ENCODE measurements at regions of chr6 and their contacts with region 1.

Region 1: DNA sequence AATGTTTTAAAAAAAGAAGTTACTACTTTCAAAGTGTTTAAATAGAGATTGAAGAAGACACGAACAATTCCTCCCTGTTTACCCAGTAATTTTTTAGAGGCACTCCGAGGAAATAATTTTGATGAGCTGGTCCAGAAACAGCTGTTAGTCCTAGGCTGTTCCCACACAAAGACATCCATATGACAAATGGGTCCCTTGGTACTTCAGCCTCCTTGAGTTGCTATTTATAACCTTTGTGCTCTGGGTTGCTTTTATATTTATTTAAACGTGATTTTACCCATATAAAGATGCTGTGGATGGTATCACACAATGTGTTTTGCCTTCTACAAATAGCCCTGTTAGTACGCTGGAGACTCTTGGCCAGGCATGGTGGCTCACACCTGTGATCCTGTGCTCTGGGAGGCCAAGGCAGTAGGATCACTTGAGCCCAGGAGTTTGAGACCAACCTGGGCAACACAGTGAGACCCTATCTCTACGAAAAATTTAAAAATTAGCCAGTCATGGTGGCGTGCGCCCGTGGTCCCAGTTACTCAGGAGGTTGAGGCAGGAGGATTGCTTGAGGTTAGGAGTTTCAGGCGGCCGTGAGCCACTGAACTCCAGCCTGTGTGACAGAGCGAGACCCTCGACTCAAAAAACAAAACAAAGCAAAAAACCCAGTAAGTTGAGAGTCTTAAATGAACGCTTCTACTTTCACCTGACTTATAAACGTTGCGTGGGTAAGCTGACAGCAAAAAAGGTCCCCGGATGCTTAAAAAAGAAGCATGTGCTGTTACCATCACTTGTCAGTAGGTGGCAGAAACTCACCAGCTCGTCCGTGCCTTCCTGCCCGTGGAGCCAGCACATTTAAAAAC is 56.9 kb upstream of the ARMH2 start:
- DNase-seq: no peak
- H3K4me3 ChIP-seq: no peak overlapping the region
- H3K27ac ChIP-seq: peak overlapping the region in 3 of 4 donors; percentile 4 to 51 (median 47)
- H3K4me1 ChIP-seq: peaks cover 0 to 54% (median 26%) of the 10 kb centered on the region in 3 donors
- H3K27me3 ChIP-seq: no peaks in the 10 kb centered on the region
- CTCF ChIP-seq: peak; percentile 75 to 91 (median 88)
- POLR2A ChIP-seq: no peak

Region 2: DNA sequence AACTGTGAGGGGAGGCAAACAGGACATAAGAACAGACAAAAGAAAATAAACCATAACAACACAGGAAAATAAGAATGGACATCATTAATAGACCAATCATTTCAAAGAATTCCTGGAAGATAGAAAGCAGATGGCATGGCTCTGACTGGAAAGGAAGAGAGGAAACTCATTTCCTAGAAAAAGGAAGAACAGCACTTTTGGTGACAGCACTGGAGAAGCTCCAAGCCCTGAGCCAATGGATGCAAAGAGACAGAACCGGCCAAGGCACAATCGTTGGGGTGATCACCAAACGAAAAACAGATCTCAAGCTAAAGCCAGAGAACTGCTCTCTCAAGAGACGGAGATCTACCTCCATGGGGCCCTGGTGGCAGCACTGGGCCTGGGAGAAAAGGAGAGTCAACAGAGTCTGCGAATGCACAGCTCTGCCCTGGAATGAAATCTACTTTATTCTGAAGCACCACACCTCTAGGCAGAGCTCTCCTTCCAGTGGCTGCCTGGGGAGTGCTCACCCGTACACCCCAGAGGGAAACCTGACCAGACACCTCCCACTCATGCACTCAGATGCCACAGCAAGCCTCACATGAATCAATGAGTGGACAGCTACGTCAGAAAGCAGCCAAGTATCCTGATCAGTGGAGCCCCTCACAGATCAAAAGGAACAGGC is 233.9 kb before region 1 on chr6:
- intact Hi-C with region 1: no loop called
- DNase-seq: no peak
- H3K4me3 ChIP-seq: no peak overlapping the region
- H3K27ac ChIP-seq: no peak overlapping the region
- H3K4me1 ChIP-seq: no peaks in the 10 kb centered on the region
- H3K27me3 ChIP-seq: no peaks in the 10 kb centered on the region
- CTCF ChIP-seq: no peak
- POLR2A ChIP-seq: no peak

Region 3: DNA sequence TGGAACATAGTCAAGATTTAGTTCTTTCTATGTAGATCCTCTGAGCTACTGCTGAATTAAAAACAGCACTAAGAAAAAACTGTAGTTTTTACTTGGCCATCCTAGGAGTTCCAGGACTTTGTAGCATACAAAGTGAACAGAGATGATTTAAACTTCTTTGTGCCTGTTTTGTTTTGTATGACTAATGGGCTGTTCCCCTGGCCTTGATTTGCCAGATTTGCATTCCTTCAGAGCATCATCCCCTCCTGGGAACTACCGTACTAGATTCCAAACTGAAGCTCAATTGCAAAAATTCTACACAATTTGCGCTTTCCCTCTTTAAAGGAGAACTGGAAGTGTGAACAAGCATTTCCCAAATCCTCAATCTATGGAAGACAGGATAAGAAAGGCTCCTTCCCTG is 165.7 kb before region 1 on chr6:
- intact Hi-C with region 1: no loop called
- DNase-seq: no peak
- H3K4me3 ChIP-seq: no peak overlapping the region
- H3K27ac ChIP-seq: no peak overlapping the region
- H3K4me1 ChIP-seq: no peaks in the 10 kb centered on the region
- H3K27me3 ChIP-seq: no peaks in the 10 kb centered on the region
- CTCF ChIP-seq: no peak
- POLR2A ChIP-seq: no peak

Region 4: GRCh38 chr6:24723258-24723657 is 132.4 kb before region 1 on chr6:
- intact Hi-C with region 1: no loop called
- DNase-seq: no peak
- H3K4me3 ChIP-seq: no peak overlapping the region
- H3K27ac ChIP-seq: no peak overlapping the region
- H3K4me1 ChIP-seq: peaks cover 0 to 17% (median 6%) of the 10 kb centered on the region in 3 donors
- H3K27me3 ChIP-seq: no peaks in the 10 kb centered on the region
- CTCF ChIP-seq: no peak
- POLR2A ChIP-seq: no peak

Region 5: GRCh38 chr6:24991810-24992467 is 136.3 kb after region 1 on chr6:
- intact Hi-C with region 1: loop called (anchors 10 kb)
- DNase-seq: no peak
- H3K4me3 ChIP-seq: no peak overlapping the region
- H3K27ac ChIP-seq: no peak overlapping the region
- H3K4me1 ChIP-seq: peaks cover 0 to 7% (median 0%) of the 10 kb centered on the region in 3 donors
- H3K27me3 ChIP-seq: no peaks in the 10 kb centered on the region
- CTCF ChIP-seq: peak; percentile 65 to 83 (median 70)
- POLR2A ChIP-seq: no peak

Region 6: GRCh38 chr6:25066593-25066992 is 211.0 kb after region 1 on chr6:
- intact Hi-C with region 1: loop called (anchors 5 kb)
- DNase-seq: no peak
- H3K4me3 ChIP-seq: no peak overlapping the region
- H3K27ac ChIP-seq: no peak overlapping the region
- H3K4me1 ChIP-seq: peaks cover 0 to 6% (median 0%) of the 10 kb centered on the region in 3 donors
- H3K27me3 ChIP-seq: no peaks in the 10 kb centered on the region
- CTCF ChIP-seq: no peak
- POLR2A ChIP-seq: no peak

Measured in esophagus squamous epithelium (tissue), 5 donors.